Activated CD4-positive, alpha-beta memory T cell treated with anti-CD3 and anti-CD28 coated beads for 36 hours (primary cell): ENCODE measurements at regions of chr6 and their contacts with region 1.

Region 1: GRCh38 chr6:154276810-154277628 is 79.6 kb downstream of the IPCEF1 start:
- DNase-seq: peak; percentile 11
- H3K4me3 Mint-ChIP-seq: peak overlapping the region; percentile 53
- H3K27ac Mint-ChIP-seq: peak overlapping the region; percentile 9
- H3K4me1 Mint-ChIP-seq: peaks cover 18% of the 10 kb centered on the region
- H3K27me3 Mint-ChIP-seq: peaks cover 3% of the 10 kb centered on the region

Region 2: DNA sequence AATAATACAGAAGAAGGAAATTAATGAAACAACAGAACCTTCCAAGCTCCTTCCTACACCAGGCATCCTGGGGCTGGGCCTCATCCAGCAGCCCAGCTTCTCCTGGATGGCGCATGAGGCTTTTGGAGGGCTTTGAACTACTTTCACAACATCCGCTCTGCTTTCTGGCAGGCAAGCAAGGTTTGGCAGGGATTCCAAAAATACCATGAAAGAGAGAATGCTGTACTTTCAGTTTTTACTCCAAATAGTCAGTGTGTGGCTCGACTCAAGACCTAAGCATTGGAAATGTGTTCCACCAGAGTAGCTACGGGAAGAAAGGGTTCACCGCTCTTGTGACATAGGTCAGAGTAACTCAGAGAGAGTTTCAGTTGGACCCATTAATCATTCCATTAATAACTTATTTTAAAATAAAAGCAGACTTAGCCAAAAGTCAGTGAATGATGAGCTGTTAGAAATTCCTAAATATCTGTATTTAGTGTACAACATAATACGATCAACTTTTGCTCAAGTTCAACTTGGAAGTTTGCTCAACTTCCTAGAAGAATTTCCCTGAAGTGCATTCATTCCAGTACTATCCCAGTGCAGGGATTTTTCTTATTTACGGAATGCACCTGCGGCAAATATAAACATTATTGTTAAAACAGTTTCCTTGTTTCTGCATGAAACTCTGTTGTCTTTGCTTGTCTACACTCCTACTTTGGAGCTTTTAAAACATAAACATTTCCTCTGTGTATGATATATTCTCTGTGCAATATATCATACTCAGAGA is 112.4 kb before region 1 on chr6:
- CTCF ChIA-PET with region 1: interaction called, 105 read pairs
- POLR2A ChIA-PET with region 1: no interaction called
- intact Hi-C with region 1: no loop called
- DNase-seq: no peak
- H3K4me3 Mint-ChIP-seq: no peak overlapping the region
- H3K27ac Mint-ChIP-seq: peak overlapping the region; percentile 6
- H3K4me1 Mint-ChIP-seq: peaks cover 41% of the 10 kb centered on the region
- H3K27me3 Mint-ChIP-seq: no peaks in the 10 kb centered on the region

Region 3: GRCh38 chr6:154229786-154230185 is 47.2 kb before region 1 on chr6:
- CTCF ChIA-PET with region 1: interaction called, 28 read pairs
- POLR2A ChIA-PET with region 1: no interaction called
- intact Hi-C with region 1: loop called (anchors 1 kb)
- DNase-seq: peak; percentile 88
- H3K4me3 Mint-ChIP-seq: peak overlapping the region; percentile 71
- H3K27ac Mint-ChIP-seq: peak overlapping the region; percentile 89
- H3K4me1 Mint-ChIP-seq: peaks cover 80% of the 10 kb centered on the region
- H3K27me3 Mint-ChIP-seq: no peaks in the 10 kb centered on the region

Region 4: DNA sequence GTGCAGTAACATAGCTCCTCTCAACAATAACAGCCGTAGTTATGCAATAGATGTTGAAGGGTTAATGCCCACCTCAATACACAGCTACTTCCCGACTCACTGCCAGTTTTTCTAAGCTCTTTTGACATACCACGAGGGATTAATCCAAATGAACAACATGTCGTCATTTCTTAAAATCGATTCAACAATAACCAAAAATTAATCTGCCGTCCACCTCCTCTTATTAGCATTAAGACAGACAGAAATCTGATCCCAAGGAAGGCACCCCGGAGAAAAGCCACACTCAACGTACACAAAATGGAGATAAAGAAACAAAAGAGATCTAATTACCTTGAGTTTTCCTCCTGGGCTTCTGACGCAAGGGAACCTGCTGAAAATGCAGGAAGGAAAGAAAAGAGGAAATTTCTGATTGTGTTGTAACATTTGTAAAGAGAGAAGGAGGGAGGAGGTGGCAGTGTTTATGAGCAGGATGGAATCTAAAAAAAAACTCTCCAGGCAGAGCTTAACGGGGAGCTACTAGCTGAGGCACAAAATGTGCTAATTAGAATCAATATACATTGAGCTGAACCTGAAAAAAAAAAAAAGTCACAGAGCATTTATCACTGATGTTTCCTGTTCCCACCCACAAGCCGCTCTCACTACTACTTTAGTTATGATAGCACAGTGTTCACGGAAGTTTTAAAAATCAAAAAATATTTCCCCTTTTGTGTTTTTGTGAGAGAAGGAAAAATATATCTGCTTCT is 29.7 kb before region 1 on chr6:
- CTCF ChIA-PET with region 1: interaction called, 11 read pairs
- POLR2A ChIA-PET with region 1: interaction called, 10 read pairs
- intact Hi-C with region 1: loop called (anchors 1 kb)
- DNase-seq: peak; percentile 55
- H3K4me3 Mint-ChIP-seq: peak overlapping the region; percentile 87
- H3K27ac Mint-ChIP-seq: peak overlapping the region; percentile 79
- H3K4me1 Mint-ChIP-seq: peaks cover 80% of the 10 kb centered on the region
- H3K27me3 Mint-ChIP-seq: no peaks in the 10 kb centered on the region

Region 5: DNA sequence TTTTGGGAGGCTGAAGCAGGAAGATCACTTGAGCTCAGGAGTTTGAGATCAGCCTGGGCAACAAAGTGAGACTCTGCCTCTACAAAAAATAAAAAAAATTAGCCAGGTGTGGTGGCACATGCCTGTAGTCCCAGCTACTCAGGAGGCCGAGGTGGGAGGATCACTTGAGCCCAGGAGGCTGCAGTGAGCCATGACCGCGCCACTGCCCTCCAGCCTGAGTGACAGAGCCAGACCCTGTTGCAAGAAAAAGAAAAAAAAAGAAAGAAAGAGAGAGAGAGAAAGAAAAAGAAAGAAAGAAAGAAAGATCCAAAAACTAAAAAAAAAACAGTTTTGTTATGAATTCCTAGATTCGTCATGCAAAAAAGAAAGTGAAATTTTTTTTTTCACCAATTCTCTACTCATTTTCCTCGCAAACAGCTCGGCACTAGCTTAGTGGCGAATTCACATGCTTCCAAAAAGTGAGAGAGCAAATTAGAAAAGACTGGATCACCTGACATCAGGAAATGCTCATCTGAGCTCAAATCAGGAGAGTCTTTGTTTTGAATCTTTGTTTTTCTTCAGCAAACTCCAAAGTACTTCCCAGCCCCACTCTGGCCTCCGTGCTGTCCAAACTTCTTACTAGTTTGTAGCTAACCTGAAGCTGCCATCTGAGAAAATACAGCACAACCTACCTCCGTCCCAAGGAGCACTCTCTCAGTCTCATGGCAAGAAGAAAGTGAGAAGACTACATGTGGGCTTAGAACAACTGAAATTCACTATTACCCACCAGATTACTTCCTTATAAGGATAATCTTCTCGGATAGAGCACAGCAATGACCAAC is 52.5 kb after region 1 on chr6:
- CTCF ChIA-PET with region 1: interaction called, 10 read pairs
- POLR2A ChIA-PET with region 1: no interaction called
- intact Hi-C with region 1: no loop called
- DNase-seq: no peak
- H3K4me3 Mint-ChIP-seq: no peak overlapping the region
- H3K27ac Mint-ChIP-seq: no peak overlapping the region
- H3K4me1 Mint-ChIP-seq: peaks cover 4% of the 10 kb centered on the region
- H3K27me3 Mint-ChIP-seq: peaks cover 4% of the 10 kb centered on the region

Region 6: GRCh38 chr6:154370545-154370944 is 93.5 kb after region 1 on chr6:
- CTCF ChIA-PET with region 1: interaction called, 16 read pairs
- POLR2A ChIA-PET with region 1: no interaction called
- intact Hi-C with region 1: loop called (anchors 1 kb)
- DNase-seq: peak; percentile 31
- H3K4me3 Mint-ChIP-seq: no peak overlapping the region
- H3K27ac Mint-ChIP-seq: no peak overlapping the region
- H3K4me1 Mint-ChIP-seq: no peaks in the 10 kb centered on the region
- H3K27me3 Mint-ChIP-seq: no peaks in the 10 kb centered on the region